Activated CD8-positive, alpha-beta memory T cell treated with anti-CD3 and anti-CD28 coated beads, Interleukin-2, amount 10 ng/mL, durations not matched to agents 7 days and 5 days (primary cell): ENCODE measurements at regions of chr19 and their contacts with region 1.

Region 1: GRCh38 chr19:14059093-14059480 is 2.8 kb downstream of the PALM3 start:
- DNase-seq: peak; percentile 66
- ATAC-seq: no peak
- H3K4me3 Mint-ChIP-seq: no peak overlapping the region
- H3K27ac Mint-ChIP-seq: no peak overlapping the region
- H3K4me1 Mint-ChIP-seq: peaks cover 12% of the 10 kb centered on the region
- H3K27me3 Mint-ChIP-seq: peaks cover 45% of the 10 kb centered on the region

Region 2: GRCh38 chr19:13905938-13906904 is 152.9 kb before region 1 on chr19 and contains the starts of genes BRME1 and CC2D1A:
- CTCF ChIA-PET with region 1: interaction called, 12 read pairs
- DNase-seq: peak; percentile 96
- ATAC-seq: peak; percentile 99
- H3K4me3 Mint-ChIP-seq: peak within 1 kb of the TSS; percentile 80
- H3K27ac Mint-ChIP-seq: peak within 1 kb of the TSS; percentile 87
- H3K4me1 Mint-ChIP-seq: peaks cover 20% of the 10 kb centered on the region
- H3K27me3 Mint-ChIP-seq: no peaks in the 10 kb centered on the region
- total RNA-seq, gene BRME1: 4.1 to 4.4 TPM
- total RNA-seq, gene CC2D1A: 34.0 to 35.1 TPM

Region 3: GRCh38 chr19:13978347-13978733 is 80.7 kb before region 1 on chr19:
- CTCF ChIA-PET with region 1: interaction called, 18 read pairs
- DNase-seq: peak; percentile 50
- ATAC-seq: peak; percentile 32
- H3K4me3 Mint-ChIP-seq: no peak overlapping the region
- H3K27ac Mint-ChIP-seq: no peak overlapping the region
- H3K4me1 Mint-ChIP-seq: peaks cover 46% of the 10 kb centered on the region
- H3K27me3 Mint-ChIP-seq: no peaks in the 10 kb centered on the region

Region 4: GRCh38 chr19:14048443-14049153 is 10.5 kb before region 1 on chr19:
- CTCF ChIA-PET with region 1: interaction called, 86 read pairs
- DNase-seq: peak; percentile 79
- ATAC-seq: peak; percentile 79
- H3K4me3 Mint-ChIP-seq: no peak overlapping the region
- H3K27ac Mint-ChIP-seq: no peak overlapping the region
- H3K4me1 Mint-ChIP-seq: peaks cover 2% of the 10 kb centered on the region
- H3K27me3 Mint-ChIP-seq: no peaks in the 10 kb centered on the region

Region 5: DNA sequence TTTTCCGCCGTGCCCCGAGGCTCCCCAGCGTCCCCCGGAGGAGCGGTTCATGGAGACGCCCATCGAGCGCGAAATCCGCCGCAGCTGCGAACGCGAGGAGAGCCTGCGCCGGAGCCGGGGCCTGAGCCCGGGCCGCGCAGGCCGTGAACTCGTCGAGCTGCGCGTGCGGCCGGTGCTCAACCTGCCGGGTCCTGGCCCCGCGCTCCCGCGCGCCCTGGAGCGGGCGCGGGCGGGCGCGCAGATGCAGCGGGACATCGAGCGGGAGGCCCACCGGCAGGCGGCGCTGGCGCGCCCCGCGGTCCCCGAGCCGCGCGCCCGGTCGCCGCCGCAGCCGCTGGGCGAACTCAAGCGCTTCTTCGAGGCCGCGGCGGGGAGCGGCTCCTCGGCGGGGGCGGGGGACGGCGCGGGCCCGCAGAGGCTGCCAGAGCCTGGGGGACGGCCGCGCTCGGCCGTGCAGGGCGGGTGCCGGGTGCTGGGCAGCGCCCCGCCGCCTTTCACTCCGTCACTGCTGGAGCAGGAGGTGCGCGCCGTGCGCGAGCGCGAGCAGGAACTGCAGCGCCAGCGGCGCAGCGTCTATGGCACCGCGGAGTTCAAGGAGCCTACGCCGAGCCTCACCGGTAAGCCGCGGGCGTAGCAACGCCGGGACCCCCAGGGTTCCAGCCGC is 14.3 kb after region 1 on chr19:
- CTCF ChIA-PET with region 1: interaction called, 118 read pairs
- DNase-seq: peak; percentile 82
- ATAC-seq: peak; percentile 79
- H3K4me3 Mint-ChIP-seq: peak overlapping the region; percentile 84
- H3K27ac Mint-ChIP-seq: peak overlapping the region; percentile 81
- H3K4me1 Mint-ChIP-seq: peaks cover 23% of the 10 kb centered on the region
- H3K27me3 Mint-ChIP-seq: peaks cover 3% of the 10 kb centered on the region

Region 6: DNA sequence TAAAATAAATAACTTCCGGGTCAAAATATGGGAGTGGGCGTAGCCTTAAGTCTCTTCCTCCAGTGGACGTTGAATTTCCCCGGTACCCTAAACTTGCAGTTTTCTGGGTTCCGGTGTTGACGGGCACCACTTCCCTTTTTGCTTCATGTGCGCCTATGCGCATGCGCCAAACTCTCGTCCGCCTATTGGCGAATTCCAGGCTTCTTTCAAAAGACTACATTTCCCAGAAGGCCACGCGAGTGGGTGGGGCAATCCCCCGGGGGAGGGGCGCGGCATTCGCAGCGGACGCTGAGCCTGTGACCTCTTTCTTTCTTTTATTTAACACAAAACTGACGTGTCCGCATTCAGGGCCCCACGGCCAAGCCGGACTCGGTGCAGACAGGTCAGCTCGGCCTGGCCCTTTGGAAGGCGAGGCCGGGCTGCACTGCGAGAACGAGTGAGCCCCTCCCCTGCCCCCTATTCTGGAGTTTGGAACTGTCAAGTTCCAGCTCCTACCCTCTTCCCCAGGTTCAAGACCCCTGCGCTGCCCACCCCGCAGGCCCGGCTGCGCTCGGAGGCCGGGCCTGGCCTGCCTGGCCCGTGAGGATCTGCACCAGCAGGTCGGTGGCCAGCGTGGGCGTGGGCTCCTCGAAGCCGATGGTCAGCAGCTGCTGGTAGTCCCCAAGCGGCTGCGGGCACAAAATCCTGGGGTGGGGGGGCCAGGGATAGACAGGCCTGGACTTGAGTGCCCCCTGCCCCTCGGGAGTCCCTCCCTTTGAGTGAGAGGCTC is 22.4 kb after region 1 on chr19:
- CTCF ChIA-PET with region 1: interaction called, 27 read pairs
- DNase-seq: peak; percentile 100
- ATAC-seq: peak; percentile 97
- H3K4me3 Mint-ChIP-seq: peak overlapping the region; percentile 92
- H3K27ac Mint-ChIP-seq: peak overlapping the region; percentile 92
- H3K4me1 Mint-ChIP-seq: peaks cover 16% of the 10 kb centered on the region
- H3K27me3 Mint-ChIP-seq: no peaks in the 10 kb centered on the region

Region 7: GRCh38 chr19:14198384-14199376 is 139.6 kb after region 1 on chr19:
- CTCF ChIA-PET with region 1: no interaction called
- DNase-seq: no peak
- ATAC-seq: no peak
- H3K4me3 Mint-ChIP-seq: no peak overlapping the region
- H3K27ac Mint-ChIP-seq: no peak overlapping the region
- H3K4me1 Mint-ChIP-seq: peaks cover 13% of the 10 kb centered on the region
- H3K27me3 Mint-ChIP-seq: peaks cover 4% of the 10 kb centered on the region